Activated CD4-positive, alpha-beta T cell treated with anti-CD3 and anti-CD28 coated beads for 36 hours (primary cell): ENCODE measurements at regions of chr7 and their contacts with region 1.

Region 1: GRCh38 chr7:15015545-15016326 is 113.2 kb upstream of the DGKB start:
- DNase-seq: peak; percentile 10
- ATAC-seq: peak; percentile 79
- H3K4me3 Mint-ChIP-seq: no peak overlapping the region
- H3K27ac Mint-ChIP-seq: no peak overlapping the region
- H3K4me1 Mint-ChIP-seq: no peaks in the 10 kb centered on the region
- H3K27me3 Mint-ChIP-seq: no peaks in the 10 kb centered on the region

Region 2: GRCh38 chr7:14045651-14046050 is 970.1 kb before region 1 on chr7:
- CTCF ChIA-PET with region 1: no interaction called
- POLR2A ChIA-PET with region 1: no interaction called
- intact Hi-C with region 1: no loop called
- DNase-seq: no peak
- ATAC-seq: no peak
- H3K4me3 Mint-ChIP-seq: no peak overlapping the region
- H3K27ac Mint-ChIP-seq: no peak overlapping the region
- H3K4me1 Mint-ChIP-seq: no peaks in the 10 kb centered on the region
- H3K27me3 Mint-ChIP-seq: no peaks in the 10 kb centered on the region

Region 3: DNA sequence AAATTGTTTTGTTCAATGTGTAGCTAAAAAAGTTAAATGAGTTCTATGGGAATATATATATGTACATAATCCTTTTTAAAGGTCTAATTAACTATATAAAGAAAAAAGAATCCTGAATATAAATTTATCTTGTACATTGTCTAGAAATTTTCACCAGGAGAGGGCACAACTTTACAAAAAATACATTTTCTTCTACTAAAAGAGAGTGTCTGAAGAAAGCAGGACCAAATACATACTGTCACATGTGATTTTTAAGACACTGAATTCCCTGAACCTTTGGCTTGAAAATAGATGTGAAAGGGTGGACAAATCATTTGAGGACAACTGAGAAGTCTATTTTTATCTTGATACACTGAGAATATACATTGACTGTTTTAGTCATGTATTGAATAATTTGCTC is 317.5 kb before region 1 on chr7:
- CTCF ChIA-PET with region 1: interaction called, 4 read pairs
- POLR2A ChIA-PET with region 1: no interaction called
- intact Hi-C with region 1: loop called in 1 of 2 experiments (anchors 1 kb)
- DNase-seq: no peak
- ATAC-seq: no peak
- H3K4me3 Mint-ChIP-seq: no peak overlapping the region
- H3K27ac Mint-ChIP-seq: no peak overlapping the region
- H3K4me1 Mint-ChIP-seq: no peaks in the 10 kb centered on the region
- H3K27me3 Mint-ChIP-seq: no peaks in the 10 kb centered on the region

Region 4: DNA sequence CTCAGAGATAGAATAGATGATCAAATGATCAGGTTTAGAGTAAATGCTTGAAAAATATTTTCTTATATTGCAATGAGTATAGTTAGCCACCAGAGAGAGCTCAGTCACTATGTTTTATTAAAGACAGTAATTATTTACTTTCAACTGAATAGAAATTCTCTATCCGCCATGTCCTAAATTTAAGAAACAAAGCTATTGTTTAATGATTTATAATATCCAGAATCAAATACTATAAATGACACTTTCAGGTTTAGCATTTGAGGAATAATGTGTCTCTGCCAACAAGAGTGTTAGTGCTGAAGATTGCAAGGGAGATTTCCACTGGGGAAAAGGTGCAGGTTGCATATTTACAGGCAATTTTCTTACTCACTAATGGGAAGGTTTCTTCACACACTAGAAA is 297.9 kb before region 1 on chr7:
- CTCF ChIA-PET with region 1: interaction called, 4 read pairs
- POLR2A ChIA-PET with region 1: no interaction called
- intact Hi-C with region 1: loop called (anchors 1 to 5 kb)
- DNase-seq: no peak
- ATAC-seq: no peak
- H3K4me3 Mint-ChIP-seq: no peak overlapping the region
- H3K27ac Mint-ChIP-seq: no peak overlapping the region
- H3K4me1 Mint-ChIP-seq: peaks cover 9% of the 10 kb centered on the region
- H3K27me3 Mint-ChIP-seq: no peaks in the 10 kb centered on the region

Region 5: DNA sequence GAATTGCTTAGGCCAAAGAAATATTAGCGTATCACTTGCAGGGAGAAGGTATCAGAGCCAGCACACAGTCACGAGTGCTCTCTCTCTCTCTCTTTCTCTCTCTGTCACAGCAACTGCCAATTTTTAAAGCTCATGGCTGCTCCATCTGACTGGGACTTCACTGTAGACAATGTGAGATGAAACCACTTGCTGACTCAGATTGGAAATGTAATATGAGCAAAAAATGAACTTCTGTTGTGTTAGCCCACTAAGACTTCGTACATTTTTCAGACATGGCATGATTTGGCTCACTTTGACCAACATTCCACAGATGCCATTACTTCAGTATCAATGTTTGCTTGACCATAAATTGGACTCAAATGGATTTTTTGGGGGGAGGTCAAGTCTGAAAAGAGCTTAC is 181.3 kb before region 1 on chr7:
- CTCF ChIA-PET with region 1: no interaction called
- POLR2A ChIA-PET with region 1: no interaction called
- intact Hi-C with region 1: no loop called
- DNase-seq: no peak
- ATAC-seq: no peak
- H3K4me3 Mint-ChIP-seq: no peak overlapping the region
- H3K27ac Mint-ChIP-seq: no peak overlapping the region
- H3K4me1 Mint-ChIP-seq: no peaks in the 10 kb centered on the region
- H3K27me3 Mint-ChIP-seq: no peaks in the 10 kb centered on the region

Region 6: DNA sequence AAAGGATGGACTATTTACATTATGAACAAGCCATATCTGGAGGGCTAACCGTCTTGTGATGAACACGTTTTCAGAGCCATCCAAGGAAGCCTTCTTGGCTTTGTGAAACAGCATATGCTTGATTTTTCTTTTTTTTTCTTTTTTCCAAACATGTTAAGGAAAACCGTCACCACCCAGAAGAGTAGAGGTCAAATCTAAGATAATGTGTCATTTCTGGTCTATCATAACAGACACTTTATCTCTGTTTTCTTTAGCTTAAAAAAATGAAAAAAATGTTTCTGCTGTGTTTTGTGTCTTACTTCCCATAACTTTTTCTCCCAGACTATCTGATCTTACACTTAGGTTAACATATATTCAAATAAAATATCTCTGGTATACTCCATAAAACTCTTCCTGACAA is 37.0 kb before region 1 on chr7:
- CTCF ChIA-PET with region 1: no interaction called
- POLR2A ChIA-PET with region 1: no interaction called
- intact Hi-C with region 1: no loop called
- DNase-seq: no peak
- ATAC-seq: no peak
- H3K4me3 Mint-ChIP-seq: no peak overlapping the region
- H3K27ac Mint-ChIP-seq: no peak overlapping the region
- H3K4me1 Mint-ChIP-seq: no peaks in the 10 kb centered on the region
- H3K27me3 Mint-ChIP-seq: no peaks in the 10 kb centered on the region